Activated T-helper 1 cell treated with anti-CD3 and anti-CD28 coated beads, Interleukin-12 subunit alpha, Interleukin-12 subunit beta, Interleukin-2, Interleukin-4 antibody, amounts not matched to agents 30 ng/mL and 10 ng/mL and 1 ng/mL, durations not matched to agents 14 hours and 24 hours and 36 hours (primary cell): ENCODE measurements at regions of chrX and their contacts with region 1.

Region 1: DNA sequence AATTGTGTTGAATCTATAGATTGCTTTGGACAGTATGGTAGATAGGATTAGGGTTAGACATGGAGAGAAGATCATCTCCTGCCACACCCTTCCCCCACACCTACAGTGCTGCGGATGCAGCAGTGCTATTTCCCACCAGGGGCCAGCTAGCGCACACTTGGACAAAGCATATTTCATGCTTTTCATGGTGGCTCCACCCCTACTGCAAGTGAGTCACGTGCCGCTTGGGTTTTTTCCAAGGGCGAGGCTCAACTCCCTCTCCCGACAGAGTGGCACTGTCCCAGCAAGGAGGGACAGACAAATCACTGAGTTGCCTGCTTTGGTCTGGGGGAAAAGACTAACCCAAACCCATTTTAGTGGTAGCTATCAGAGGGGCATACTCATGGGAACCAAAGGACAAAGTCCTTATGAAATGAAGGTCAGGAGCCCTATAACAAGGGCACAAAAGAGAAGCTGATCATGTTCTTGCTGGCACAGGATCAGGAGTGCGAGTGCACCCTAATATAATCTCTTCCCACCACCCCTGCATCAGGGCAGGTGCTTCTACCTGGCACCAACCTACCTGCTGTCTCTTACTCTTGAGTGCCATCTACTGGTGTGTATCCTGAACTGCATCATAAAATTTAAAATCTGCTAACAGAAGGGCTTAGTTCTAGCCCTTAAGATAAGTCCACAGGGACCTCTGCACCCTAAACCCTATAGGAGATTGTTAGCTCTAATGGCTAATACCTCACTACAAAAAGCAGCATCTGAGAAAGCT is 55.1 kb upstream of the PGAM4 start:
- DNase-seq: no peak
- H3K4me3 Mint-ChIP-seq: no peak overlapping the region
- H3K27ac Mint-ChIP-seq: no peak overlapping the region
- H3K4me1 Mint-ChIP-seq: no peaks in the 10 kb centered on the region
- H3K27me3 Mint-ChIP-seq: no peaks in the 10 kb centered on the region

Region 2: GRCh38 chrX:76279000-76279399 is 1745.5 kb before region 1 on chrX:
- intact Hi-C with region 1: loop called (anchors 5 kb)
- DNase-seq: peak; percentile 2
- H3K4me3 Mint-ChIP-seq: no peak overlapping the region
- H3K27ac Mint-ChIP-seq: no peak overlapping the region
- H3K4me1 Mint-ChIP-seq: no peaks in the 10 kb centered on the region
- H3K27me3 Mint-ChIP-seq: no peaks in the 10 kb centered on the region

Region 3: DNA sequence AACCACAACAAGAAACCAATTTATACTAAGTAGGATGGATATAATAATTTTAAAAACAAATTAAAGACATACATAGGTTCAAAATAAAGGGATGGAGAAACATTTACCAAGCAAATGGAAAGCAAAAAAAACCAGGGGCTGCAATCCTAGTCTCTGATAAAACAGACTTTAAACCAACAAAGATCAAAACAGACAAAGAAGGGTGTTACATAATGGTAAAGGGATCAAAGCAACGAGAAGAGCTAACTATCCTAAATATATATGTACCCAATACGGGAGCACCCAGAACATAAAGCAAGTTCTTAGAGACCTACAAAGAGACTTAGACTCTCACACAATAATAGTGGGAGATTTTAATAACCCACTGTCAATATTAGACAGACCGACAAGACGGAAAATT is 305.1 kb before region 1 on chrX:
- intact Hi-C with region 1: no loop called
- DNase-seq: no peak
- H3K4me3 Mint-ChIP-seq: no peak overlapping the region
- H3K27ac Mint-ChIP-seq: no peak overlapping the region
- H3K4me1 Mint-ChIP-seq: peaks cover 13% of the 10 kb centered on the region
- H3K27me3 Mint-ChIP-seq: no peaks in the 10 kb centered on the region

Region 4: GRCh38 chrX:77785486-77786364 is 238.8 kb before region 1 on chrX and contains the start of gene ATRX:
- intact Hi-C with region 1: loop called (anchors 5 kb)
- DNase-seq: peak; percentile 72
- H3K4me3 Mint-ChIP-seq: peak within 1 kb of the TSS; percentile 100
- H3K27ac Mint-ChIP-seq: peak within 1 kb of the TSS; percentile 100
- H3K4me1 Mint-ChIP-seq: peaks cover 33% of the 10 kb centered on the region
- H3K27me3 Mint-ChIP-seq: no peaks in the 10 kb centered on the region
- total RNA-seq, gene ATRX: 63.9 and 72.7 TPM in 2 replicates

Region 5: DNA sequence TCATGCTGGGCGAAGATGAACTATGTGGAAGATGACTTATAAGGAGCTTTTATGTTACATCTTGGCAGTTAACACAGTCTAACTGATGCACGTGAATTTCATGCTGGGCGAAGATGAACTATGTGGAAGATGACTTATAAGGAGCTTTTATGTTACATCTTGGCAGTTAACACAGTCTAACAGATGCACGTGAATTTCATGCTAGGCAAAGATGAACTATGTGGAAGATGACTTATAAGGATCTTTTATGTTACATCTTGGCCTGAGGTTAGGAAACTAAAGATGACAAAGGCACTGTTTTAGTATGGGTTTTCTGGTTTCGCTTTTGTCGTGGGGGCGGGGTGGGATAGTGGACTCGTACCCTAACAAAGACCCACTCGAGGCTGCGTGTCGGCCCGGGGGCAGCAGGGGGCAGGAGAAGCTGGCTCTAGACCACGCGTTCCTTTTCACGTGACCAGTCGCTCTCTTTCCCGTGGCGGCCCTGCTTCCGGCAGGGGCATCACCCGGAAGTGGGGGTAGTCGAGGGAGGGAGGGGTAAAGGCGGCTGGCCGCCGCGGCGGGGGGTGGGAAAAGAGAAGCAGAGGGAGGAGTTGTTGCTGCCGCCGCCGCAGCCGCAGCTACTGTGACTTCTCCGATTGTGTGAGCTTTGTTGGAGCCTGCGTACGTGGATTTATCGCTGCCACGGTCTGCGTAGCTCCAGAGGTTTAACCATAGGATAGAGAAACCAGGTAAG is 114.3 kb before region 1 on chrX and contains the start of gene ATP7A:
- intact Hi-C with region 1: loop called (anchors 1 kb)
- DNase-seq: peak; percentile 85
- H3K4me3 Mint-ChIP-seq: peak within 1 kb of the TSS; percentile 98
- H3K27ac Mint-ChIP-seq: peak within 1 kb of the TSS; percentile 97
- H3K4me1 Mint-ChIP-seq: peaks cover 16% of the 10 kb centered on the region
- H3K27me3 Mint-ChIP-seq: no peaks in the 10 kb centered on the region
- total RNA-seq, gene ATP7A: 6.1 and 6.9 TPM in 2 replicates

Region 6: GRCh38 chrX:78964598-78964997 is 940.1 kb after region 1 on chrX:
- intact Hi-C with region 1: no loop called
- DNase-seq: no peak
- H3K4me3 Mint-ChIP-seq: no peak overlapping the region
- H3K27ac Mint-ChIP-seq: no peak overlapping the region
- H3K4me1 Mint-ChIP-seq: peaks cover 31% of the 10 kb centered on the region
- H3K27me3 Mint-ChIP-seq: no peaks in the 10 kb centered on the region